ENCODE measurements at regions of chr17 and their contacts with region 1.

Region 1: DNA sequence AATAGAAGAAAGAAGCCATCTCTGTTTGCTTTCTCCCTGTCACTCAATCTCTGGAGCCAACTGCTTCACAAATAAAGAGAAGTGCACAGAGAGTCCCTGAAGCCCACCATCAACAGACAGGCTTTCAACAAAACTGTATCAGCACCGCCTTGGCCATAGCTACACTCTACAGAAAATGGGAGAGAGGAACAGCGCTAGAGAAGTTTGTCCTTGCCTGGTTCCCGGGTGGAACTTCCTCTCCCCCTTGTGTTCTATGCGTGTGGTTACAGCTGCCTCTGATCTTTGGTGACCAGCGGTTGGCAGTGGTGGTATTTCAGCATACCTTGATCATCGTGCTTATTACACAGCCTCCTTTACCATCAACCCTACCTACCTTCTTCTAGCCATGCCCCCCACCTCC is 91.4 kb upstream of the CCL2 start:
- DNase-seq: peak in 1 of 3 donors; percentile 21
- H3K4me3 ChIP-seq: no peak overlapping the region
- H3K4me3 Mint-ChIP-seq: no peak overlapping the region
- H3K27ac ChIP-seq: no peak overlapping the region
- H3K27ac Mint-ChIP-seq: no peak overlapping the region
- H3K4me1 ChIP-seq: no peaks in the 10 kb centered on the region
- H3K4me1 Mint-ChIP-seq: peaks cover 16% of the 10 kb centered on the region
- H3K27me3 ChIP-seq: peaks cover 8 to 13% of the 10 kb centered on the region in 2 donors
- H3K27me3 Mint-ChIP-seq: peaks cover 10 to 21% (median 17%) of the 10 kb centered on the region in 3 donors
- CTCF ChIP-seq: peak; percentile 47

Region 2: GRCh38 chr17:33779225-33779591 is 384.4 kb before region 1 on chr17:
- intact Hi-C with region 1: loop called (anchors 10 kb)
- DNase-seq: peak; percentile 28 to 41 (median 35)
- H3K4me3 ChIP-seq: no peak overlapping the region
- H3K4me3 Mint-ChIP-seq: no peak overlapping the region
- H3K27ac ChIP-seq: no peak overlapping the region
- H3K27ac Mint-ChIP-seq: no peak overlapping the region
- H3K4me1 ChIP-seq: no peaks in the 10 kb centered on the region
- H3K4me1 Mint-ChIP-seq: peaks cover 2% of the 10 kb centered on the region
- H3K27me3 ChIP-seq: peaks cover 0 to 2% of the 10 kb centered on the region in 2 donors
- H3K27me3 Mint-ChIP-seq: peaks cover 2 to 18% (median 11%) of the 10 kb centered on the region in 3 donors
- CTCF ChIP-seq: peak; percentile 98

Region 3: DNA sequence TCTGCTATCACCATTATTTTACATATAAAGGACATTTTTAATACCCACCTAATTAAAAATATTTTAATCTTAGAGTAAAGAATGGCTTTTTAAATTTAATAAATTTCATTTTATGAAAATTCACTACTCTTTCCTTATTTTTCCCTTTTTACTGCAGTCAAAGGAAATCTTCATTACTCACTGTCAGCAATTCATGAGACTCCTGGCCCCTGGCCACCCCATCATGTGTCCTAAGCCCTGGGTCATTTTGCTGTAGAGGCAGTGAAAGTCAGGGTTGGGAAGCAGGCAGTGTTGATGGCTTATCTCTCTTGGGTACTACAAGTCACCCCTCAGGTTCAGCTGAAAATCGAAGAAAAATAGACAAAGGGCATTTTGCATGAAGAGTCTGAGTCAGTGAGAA is 377.2 kb before region 1 on chr17:
- intact Hi-C with region 1: loop called in 1 of 2 experiments (anchors 10 kb)
- DNase-seq: no peak
- H3K4me3 ChIP-seq: no peak overlapping the region
- H3K4me3 Mint-ChIP-seq: no peak overlapping the region
- H3K27ac ChIP-seq: no peak overlapping the region
- H3K27ac Mint-ChIP-seq: no peak overlapping the region
- H3K4me1 ChIP-seq: no peaks in the 10 kb centered on the region
- H3K4me1 Mint-ChIP-seq: no peaks in the 10 kb centered on the region
- H3K27me3 ChIP-seq: peaks cover 0 to 2% of the 10 kb centered on the region in 2 donors
- H3K27me3 Mint-ChIP-seq: peaks cover 5 to 25% (median 6%) of the 10 kb centered on the region in 3 donors
- CTCF ChIP-seq: no peak